ENCODE measurements at regions of chr17 and their contacts with region 1.

Region 1: GRCh38 chr17:21108651-21109050 is 18.1 kb upstream of the DHRS7B start:
- DNase-seq: no peak
- ATAC-seq: no peak
- H3K4me3 Mint-ChIP-seq: no peak overlapping the region
- H3K27ac Mint-ChIP-seq: no peak overlapping the region
- H3K4me1 Mint-ChIP-seq: no peaks in the 10 kb centered on the region
- H3K27me3 Mint-ChIP-seq: peaks cover 16% of the 10 kb centered on the region

Region 2: DNA sequence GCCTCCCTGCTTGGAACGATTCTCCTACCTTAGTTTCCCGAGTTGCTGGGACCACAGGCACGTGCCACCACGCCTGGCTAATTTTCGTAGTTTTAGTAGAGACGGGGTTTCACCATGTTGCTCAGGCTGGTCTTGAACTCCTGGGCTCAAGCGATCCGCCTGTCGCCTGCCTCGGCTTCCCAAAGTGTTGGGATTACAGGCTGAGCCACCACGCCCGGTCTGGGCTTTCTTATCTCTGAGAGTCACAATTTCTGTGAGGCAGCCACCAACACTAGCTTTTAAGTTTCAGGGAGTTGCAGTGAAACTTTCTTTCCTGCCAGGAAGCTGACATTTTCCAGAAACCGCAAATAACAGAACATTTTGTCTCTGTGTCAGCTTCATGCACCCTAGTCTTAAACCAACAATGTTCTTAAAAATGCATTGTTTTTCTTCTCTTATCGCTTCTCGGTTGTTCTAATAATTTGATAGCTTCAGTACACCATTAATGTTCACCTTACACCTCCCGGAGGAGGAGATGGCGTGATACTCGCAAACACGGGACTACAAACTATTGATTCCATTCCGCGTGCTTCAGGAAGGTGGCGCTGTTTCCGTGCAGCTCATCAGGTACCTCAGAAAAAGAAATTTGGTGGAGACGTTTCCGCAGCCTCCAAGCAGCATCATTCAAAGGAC is 10.7 kb after region 1 on chr17:
- CTCF ChIA-PET with region 1: interaction called, 17 read pairs
- DNase-seq: peak; percentile 77
- ATAC-seq: peak; percentile 88
- H3K4me3 Mint-ChIP-seq: peak overlapping the region; percentile 3
- H3K27ac Mint-ChIP-seq: no peak overlapping the region
- H3K4me1 Mint-ChIP-seq: peaks cover 8% of the 10 kb centered on the region
- H3K27me3 Mint-ChIP-seq: peaks cover 10% of the 10 kb centered on the region

Measured in activated CD8-positive, alpha-beta memory T cell treated with anti-CD3 and anti-CD28 coated beads, Interleukin-2, amount 10 ng/mL, durations not matched to agents 7 days and 5 days (primary cell).